ENCODE measurements at regions of chr12 and their contacts with region 1.

Region 1: GRCh38 chr12:49288412-49288853 is 6.5 kb upstream of the PRPH start:
- DNase-seq: peak; percentile 41
- ATAC-seq: peak; percentile 72
- H3K4me3 Mint-ChIP-seq: no peak overlapping the region
- H3K27ac Mint-ChIP-seq: no peak overlapping the region
- H3K4me1 Mint-ChIP-seq: no peaks in the 10 kb centered on the region
- H3K27me3 Mint-ChIP-seq: peaks cover 32% of the 10 kb centered on the region
- CTCF ChIP-seq: peak; percentile 27

Region 2: GRCh38 chr12:49273726-49274395 is 14.6 kb before region 1 on chr12:
- CTCF ChIA-PET with region 1: no interaction called
- POLR2A ChIA-PET with region 1: no interaction called
- intact Hi-C with region 1: no loop called
- DNase-seq: no peak
- ATAC-seq: no peak
- H3K4me3 Mint-ChIP-seq: no peak overlapping the region
- H3K27ac Mint-ChIP-seq: no peak overlapping the region
- H3K4me1 Mint-ChIP-seq: no peaks in the 10 kb centered on the region
- H3K27me3 Mint-ChIP-seq: no peaks in the 10 kb centered on the region
- CTCF ChIP-seq: no peak

Region 3: DNA sequence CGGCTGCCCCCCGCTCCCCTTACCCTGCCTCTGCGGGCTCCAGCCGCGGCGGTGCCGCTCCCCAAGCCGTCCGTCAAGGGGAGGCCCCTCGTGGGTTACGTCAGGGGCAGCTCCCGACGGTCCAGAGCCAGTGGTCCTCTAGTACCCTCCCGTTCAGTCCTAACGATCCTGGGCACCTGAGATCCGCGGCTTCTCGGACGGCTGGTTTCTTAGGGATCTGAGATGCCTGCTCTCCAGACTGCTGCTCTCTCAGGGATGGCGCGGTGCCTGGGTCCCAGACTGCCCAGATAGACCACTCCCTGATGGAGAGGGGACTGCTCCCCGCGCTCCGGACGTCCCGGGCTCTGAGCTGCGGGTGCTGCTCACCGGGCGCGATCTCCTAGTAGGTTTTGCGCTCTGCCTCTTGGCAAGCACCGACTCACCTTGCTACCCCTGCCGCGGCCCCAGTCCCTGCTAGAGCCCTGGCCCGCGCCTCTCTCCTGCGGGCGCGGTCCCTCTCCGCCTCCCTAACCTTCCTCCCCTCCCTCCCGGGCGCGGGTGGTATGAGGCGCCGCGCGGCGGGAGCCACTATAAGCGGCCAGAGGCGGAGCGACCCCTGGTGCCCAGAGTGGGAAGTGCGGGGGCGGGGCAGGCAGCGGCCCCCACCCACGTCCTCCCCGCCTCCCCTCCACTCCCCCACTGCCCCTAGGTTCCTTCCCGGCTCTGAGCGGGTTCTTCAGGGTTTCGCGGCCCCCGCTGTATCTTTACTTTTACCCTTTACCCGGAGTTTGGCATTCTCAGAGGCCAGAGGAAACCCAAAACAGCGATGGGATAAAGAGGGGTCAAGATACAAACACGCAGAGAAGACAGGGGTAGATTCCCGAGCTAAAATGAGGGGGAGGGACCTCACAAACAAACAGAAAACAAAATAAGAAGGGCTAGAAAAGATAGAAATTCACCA is 48.5 kb after region 1 on chr12 and contains the start of gene C1QL4:
- CTCF ChIA-PET with region 1: interaction called, 54 read pairs
- POLR2A ChIA-PET with region 1: interaction called, 6 read pairs
- intact Hi-C with region 1: loop called (anchors 1 kb)
- DNase-seq: peak; percentile 95
- ATAC-seq: peak; percentile 97
- H3K4me3 Mint-ChIP-seq: peak within 1 kb of the TSS; percentile 73
- H3K27ac Mint-ChIP-seq: no peak within 1 kb of the TSS
- H3K4me1 Mint-ChIP-seq: peaks cover 31% of the 10 kb centered on the region
- H3K27me3 Mint-ChIP-seq: peaks cover 49% of the 10 kb centered on the region
- CTCF ChIP-seq: no peak
- total RNA-seq, gene C1QL4: not detected in 2 replicates

Region 4: DNA sequence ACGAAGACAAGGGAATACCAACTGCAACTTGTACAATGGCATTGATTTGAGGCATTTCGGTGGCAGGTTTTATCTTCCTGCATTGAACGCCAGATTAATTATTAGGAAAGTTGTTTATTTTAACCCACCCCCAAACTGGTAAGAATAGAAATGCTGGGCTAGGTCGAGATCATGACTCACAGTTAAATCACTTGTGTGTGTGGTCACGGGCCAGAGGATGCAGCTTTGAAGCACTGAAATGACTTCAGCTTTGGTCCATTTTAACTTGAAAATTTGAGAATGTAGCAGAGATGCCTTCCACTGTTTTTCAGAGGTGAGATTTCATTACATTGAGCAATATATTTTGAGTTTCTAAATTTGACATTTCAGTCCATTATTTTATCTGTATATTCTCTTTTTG is 226.8 kb after region 1 on chr12:
- CTCF ChIA-PET with region 1: interaction called, 33 read pairs
- POLR2A ChIA-PET with region 1: no interaction called
- intact Hi-C with region 1: loop called (anchors 1 kb)
- DNase-seq: no peak
- ATAC-seq: no peak
- H3K4me3 Mint-ChIP-seq: no peak overlapping the region
- H3K27ac Mint-ChIP-seq: no peak overlapping the region
- H3K4me1 Mint-ChIP-seq: no peaks in the 10 kb centered on the region
- H3K27me3 Mint-ChIP-seq: no peaks in the 10 kb centered on the region
- CTCF ChIP-seq: no peak

Region 5: GRCh38 chr12:49580572-49581535 is 292.4 kb after region 1 on chr12:
- CTCF ChIA-PET with region 1: interaction called, 6 read pairs
- POLR2A ChIA-PET with region 1: no interaction called
- intact Hi-C with region 1: loop called (anchors 2 kb)
- DNase-seq: no peak
- ATAC-seq: peak; percentile 62
- H3K4me3 Mint-ChIP-seq: no peak overlapping the region
- H3K27ac Mint-ChIP-seq: no peak overlapping the region
- H3K4me1 Mint-ChIP-seq: peaks cover 11% of the 10 kb centered on the region
- H3K27me3 Mint-ChIP-seq: no peaks in the 10 kb centered on the region
- CTCF ChIP-seq: no peak

Measured in activated B cell treated with CpG ODN at 0.5 μM for 24 hours (primary cell).